HCT116 (cell line): ENCODE measurements at regions of chr19 and their contacts with region 1.

Region 1: DNA sequence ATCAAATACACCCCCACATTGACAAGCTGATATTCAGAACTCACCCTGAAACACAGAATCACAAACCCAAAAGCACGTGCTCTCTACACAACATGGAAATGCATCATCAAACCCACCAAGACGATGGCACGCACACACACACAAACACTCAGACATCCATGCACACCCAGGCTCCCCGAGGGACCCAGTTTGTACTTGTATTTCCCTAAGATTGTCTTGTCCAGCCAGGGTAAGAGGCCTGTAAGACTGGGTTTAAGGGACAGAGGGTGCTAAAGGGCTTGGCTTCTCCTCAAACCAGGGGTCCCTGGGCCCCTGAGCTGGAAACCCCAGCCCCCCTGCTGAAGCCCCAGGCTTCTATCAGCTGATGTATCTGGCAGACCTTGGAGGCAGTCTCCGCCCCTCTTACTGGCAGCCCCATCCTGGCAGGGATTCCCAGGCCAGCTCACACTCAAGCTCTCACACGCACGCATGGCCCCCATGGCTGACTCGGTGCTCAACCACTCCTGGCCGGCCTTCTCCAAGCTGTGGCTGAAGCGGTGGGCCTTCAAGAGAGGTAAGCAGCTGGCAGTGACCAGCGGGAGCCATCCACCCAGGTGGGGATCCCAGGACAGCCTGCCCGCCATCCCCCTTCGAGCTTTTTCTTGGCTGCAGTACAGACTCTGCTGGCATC is 6.5 kb downstream of the ARHGEF18 start:
- DNase-seq: no peak
- ATAC-seq: no peak
- H3K4me3 ChIP-seq: no peak overlapping the region
- H3K27ac ChIP-seq: no peak overlapping the region; the same call in 1 of the 2 replicates
- H3K4me1 ChIP-seq: peaks cover 0 to 7% of the 10 kb centered on the region in 2 experiments; a peak in 1 of 4 replicates
- H3K27me3 ChIP-seq: no peaks in the 10 kb centered on the region
- CTCF ChIP-seq: no peak
- POLR2A ChIP-seq: no peak
- RAD21 ChIP-seq: no peak

Region 2: GRCh38 chr19:7177926-7178325 is 177.4 kb before region 1 on chr19:
- CTCF ChIA-PET with region 1: no interaction called
- POLR2A ChIA-PET with region 1: no interaction called
- RAD21 ChIA-PET with region 1: no interaction called
- intact Hi-C with region 1: no loop called
- DNase-seq: no peak
- ATAC-seq: no peak
- H3K4me3 ChIP-seq: no peak overlapping the region
- H3K27ac ChIP-seq: no peak overlapping the region
- H3K4me1 ChIP-seq: no peaks in the 10 kb centered on the region
- H3K27me3 ChIP-seq: no peaks in the 10 kb centered on the region
- CTCF ChIP-seq: no peak
- POLR2A ChIP-seq: no peak
- RAD21 ChIP-seq: no peak

Region 3: DNA sequence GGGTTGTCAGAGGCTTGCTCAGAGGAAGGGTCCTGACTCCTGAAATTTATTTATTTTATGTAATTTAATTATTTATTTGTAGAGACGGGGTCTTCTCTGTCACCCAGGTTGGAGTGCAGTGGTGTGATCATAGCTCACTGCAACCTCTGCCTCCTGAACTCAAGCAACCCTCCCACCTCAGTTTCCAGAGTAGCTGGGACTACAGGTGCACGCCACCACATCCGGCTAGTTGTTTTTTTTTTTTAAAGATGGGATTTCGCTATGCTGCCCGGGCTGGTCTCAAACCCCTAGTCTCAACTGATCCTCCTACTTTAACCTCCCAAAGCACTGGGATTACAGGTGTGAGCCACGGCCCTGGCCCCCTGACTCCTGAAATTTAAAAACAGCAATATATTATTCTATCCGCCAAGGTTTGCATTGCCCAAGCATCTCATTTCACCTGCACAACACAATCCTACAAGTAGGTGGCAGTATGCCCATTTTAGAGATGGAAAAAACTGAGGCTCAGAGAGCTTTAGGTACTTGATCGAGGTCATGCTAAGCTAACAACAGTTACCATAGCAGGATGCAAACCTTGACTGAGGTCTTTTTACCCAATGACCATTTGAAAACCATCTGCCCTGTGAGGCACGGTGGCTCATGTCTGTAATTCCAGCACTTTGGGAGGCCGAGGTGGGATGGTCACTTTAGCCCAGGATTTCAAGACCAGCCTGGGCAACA is 11.6 kb after region 1 on chr19:
- CTCF ChIA-PET with region 1: interaction called, 20 read pairs
- POLR2A ChIA-PET with region 1: interaction called, 6 read pairs
- RAD21 ChIA-PET with region 1: interaction called in 1 of 2 experiments, 4 read pairs
- intact Hi-C with region 1: no loop called
- DNase-seq: peak; percentile 62
- ATAC-seq: peak; percentile 67
- H3K4me3 ChIP-seq: no peak overlapping the region
- H3K27ac ChIP-seq: no peak overlapping the region
- H3K4me1 ChIP-seq: peaks cover 17 to 24% of the 10 kb centered on the region in 2 experiments
- H3K27me3 ChIP-seq: peaks cover 8% of the 10 kb centered on the region; the same call in 1 of the 2 replicates
- CTCF ChIP-seq: peak; percentile 37 to 53 (median 52); a peak in 5 of 6 replicates
- POLR2A ChIP-seq: no peak
- RAD21 ChIP-seq: peak; percentile 64

Region 4: GRCh38 chr19:7376151-7376852 is 21.0 kb after region 1 on chr19:
- CTCF ChIA-PET with region 1: interaction called, 20 read pairs
- POLR2A ChIA-PET with region 1: interaction called, 3 read pairs
- RAD21 ChIA-PET with region 1: interaction called, 3 to 8 read pairs
- intact Hi-C with region 1: loop called (anchors 1 kb)
- DNase-seq: no peak
- ATAC-seq: no peak
- H3K4me3 ChIP-seq: no peak overlapping the region
- H3K27ac ChIP-seq: no peak overlapping the region
- H3K4me1 ChIP-seq: peaks cover 6 to 13% of the 10 kb centered on the region in 2 experiments; a peak in 3 of 4 replicates
- H3K27me3 ChIP-seq: no peaks in the 10 kb centered on the region
- CTCF ChIP-seq: no peak
- POLR2A ChIP-seq: no peak
- RAD21 ChIP-seq: no peak

Region 5: GRCh38 chr19:7562646-7563393 is 207.5 kb after region 1 on chr19:
- CTCF ChIA-PET with region 1: interaction called, 16 read pairs
- POLR2A ChIA-PET with region 1: interaction called, 5 read pairs
- RAD21 ChIA-PET with region 1: no interaction called
- intact Hi-C with region 1: no loop called
- DNase-seq: no peak
- ATAC-seq: no peak
- H3K4me3 ChIP-seq: no peak overlapping the region
- H3K27ac ChIP-seq: no peak overlapping the region
- H3K4me1 ChIP-seq: no peaks in the 10 kb centered on the region
- H3K27me3 ChIP-seq: no peaks in the 10 kb centered on the region
- CTCF ChIP-seq: no peak
- POLR2A ChIP-seq: no peak
- RAD21 ChIP-seq: no peak